Activated T-helper 2 cell treated with anti-CD3 and anti-CD28 coated beads, Interferon-gamma antibody, Interleukin-2, Interleukin-4, amounts not matched to agents 10 μg/mL and 5 μg/mL and 100 μg/mL, durations not matched to agents 14 hours and 24 hours and 36 hours (primary cell): ENCODE measurements at regions of chr6 and their contacts with region 1.

Region 1: GRCh38 chr6:158441716-158442215 is 118.1 kb upstream of the TMEM181 start:
- DNase-seq: no peak
- H3K4me3 Mint-ChIP-seq: no peak overlapping the region
- H3K27ac Mint-ChIP-seq: no peak overlapping the region
- H3K4me1 Mint-ChIP-seq: peaks cover 2% of the 10 kb centered on the region
- H3K27me3 Mint-ChIP-seq: no peaks in the 10 kb centered on the region

Region 2: DNA sequence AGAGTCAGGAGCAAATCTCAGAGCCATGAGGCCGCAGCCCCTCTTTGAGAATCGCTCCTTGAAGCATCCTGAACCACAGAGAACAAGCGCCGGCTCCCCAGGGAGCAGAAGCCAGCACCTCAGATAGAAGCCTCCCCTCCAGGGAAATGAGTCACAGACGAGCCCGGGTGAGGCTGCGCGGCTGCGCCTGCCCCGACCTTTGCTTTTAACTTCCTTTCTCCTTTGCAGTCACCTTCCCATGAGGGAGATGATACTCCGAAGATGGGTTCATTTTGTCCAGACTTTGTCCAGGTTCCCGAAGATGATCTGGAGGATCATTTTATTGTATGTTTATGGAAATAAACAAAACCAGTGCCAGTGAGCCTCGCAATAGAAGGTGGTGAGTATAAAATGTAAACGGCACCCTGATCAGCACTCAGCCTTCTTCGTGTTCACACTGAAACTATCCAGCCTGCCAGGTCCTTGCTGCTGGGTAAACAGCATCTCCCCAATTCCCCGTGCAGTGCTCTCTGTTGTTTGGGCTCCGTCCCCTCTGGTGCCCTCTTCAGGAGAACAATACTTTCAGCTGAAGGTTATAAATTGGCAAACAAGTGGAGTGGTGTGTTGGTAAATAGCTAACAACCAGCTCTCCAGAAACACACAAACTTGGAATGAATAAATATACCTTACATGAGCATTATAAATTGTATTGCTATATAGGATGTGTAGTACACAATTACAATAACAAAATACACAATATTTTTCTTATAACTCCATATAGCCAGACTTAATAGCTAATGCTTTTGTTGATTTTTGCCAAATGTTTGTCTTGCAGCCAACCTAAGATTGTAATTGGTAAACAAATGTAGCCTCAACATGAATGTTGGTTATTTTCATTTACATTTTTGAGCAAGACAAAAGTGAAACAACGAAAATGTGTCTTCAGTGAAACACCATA is 76.7 kb after region 1 on chr6:
- intact Hi-C with region 1: loop called (anchors 10 kb)
- DNase-seq: peak; percentile 66
- H3K4me3 Mint-ChIP-seq: peak overlapping the region; percentile 81
- H3K27ac Mint-ChIP-seq: peak overlapping the region; percentile 72
- H3K4me1 Mint-ChIP-seq: peaks cover 32% of the 10 kb centered on the region
- H3K27me3 Mint-ChIP-seq: peaks cover 13% of the 10 kb centered on the region